ENCODE measurements at regions of chr5 and their contacts with region 1.

Region 1: DNA sequence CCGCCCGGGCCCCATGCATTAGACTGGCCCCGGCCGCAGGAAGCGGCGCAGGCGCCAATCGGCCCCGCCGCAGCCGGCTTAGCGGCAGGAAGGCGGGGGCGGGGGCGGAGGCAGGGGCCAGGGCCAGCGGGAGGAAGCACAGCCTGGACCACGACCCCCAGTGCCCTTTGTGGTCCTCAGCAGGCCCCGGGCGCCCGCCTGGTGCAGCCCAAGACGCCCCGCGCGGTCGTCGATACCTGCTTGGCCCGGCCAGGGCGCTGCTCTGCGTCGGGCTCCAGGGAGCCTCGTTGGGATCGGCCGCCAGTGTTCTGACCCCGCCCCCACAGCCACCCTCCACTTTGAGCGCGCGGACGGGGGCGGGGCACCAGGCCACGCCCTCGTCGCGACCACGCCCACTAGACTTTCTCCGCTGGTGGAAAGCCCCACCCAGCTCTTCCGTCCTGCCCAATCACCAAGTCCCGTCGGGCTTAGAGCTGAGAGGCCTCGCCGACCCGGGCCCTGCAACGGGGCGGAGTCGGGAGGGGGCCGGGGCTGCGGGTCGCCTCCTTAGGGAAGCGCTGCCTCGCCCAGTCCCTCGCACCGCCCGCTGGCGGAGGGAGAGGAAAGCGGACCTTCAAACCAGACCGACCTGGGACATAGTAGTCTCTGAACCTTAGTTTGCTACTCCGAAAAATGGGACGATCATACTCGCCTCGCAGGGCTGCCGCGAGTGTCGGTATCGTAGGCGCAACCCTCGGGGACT is at the start of gene PDLIM7:
- DNase-seq: peak; percentile 88 to 97 (median 93)
- ATAC-seq: peak; percentile 88
- H3K4me3 ChIP-seq: peak within 1 kb of the TSS; percentile 64 to 80
- H3K4me3 Mint-ChIP-seq: peak within 1 kb of the TSS; percentile 82
- H3K27ac ChIP-seq: peak within 1 kb of the TSS; percentile 18 to 20
- H3K27ac Mint-ChIP-seq: no peak within 1 kb of the TSS
- H3K4me1 ChIP-seq: peaks cover 27% of the 10 kb centered on the region
- H3K4me1 Mint-ChIP-seq: peaks cover 30% of the 10 kb centered on the region
- H3K27me3 ChIP-seq: no peaks in the 10 kb centered on the region
- H3K27me3 Mint-ChIP-seq: no peaks in the 10 kb centered on the region
- CTCF ChIP-seq: no peak
- total RNA-seq, gene PDLIM7: 6.6 to 7.1 TPM

Region 2: DNA sequence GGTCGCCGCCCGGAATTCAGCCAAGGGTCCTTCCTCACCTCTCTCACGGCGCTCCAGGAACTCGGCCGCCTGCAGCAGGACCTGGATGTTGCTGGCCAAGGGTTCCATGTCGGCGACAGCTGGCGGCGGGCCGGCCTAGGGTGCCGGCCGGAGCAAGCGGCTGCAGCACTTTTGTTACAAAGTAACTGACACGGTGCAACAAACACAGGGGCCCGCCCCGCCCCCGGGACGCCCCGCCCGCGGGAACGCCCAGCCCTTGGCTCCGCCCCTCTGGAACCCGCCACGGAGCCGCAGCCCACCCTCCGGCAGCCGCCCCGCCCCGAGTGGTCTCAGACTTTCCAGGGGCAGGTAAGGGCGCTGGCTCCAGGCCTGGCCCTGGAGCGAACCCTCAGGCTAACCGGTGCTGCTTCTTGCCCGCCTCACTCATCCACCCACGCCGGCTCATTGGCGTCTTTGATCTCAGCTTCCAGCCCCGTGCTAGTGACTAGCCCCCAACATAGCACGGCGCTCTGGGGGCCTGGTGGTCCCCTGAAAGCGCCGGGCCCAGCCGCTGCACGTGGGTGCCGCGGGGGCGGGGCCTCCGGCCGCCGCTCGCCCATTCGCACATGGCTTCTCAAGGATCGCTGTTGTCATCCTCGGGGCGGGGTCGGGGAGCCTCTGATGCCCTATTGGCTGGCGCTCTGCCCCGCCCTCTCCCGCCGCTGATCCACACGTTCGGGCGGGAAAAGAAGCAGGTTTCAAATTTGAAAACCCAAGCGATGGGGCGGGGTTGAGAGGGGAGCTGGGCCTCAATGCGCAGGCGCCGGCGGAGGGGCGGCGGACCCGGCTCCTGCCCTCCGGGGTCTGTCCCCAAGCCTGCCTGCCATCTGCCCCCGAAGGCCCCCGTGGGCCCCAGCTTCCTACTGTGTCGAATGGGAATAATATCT is 185.5 kb before region 1 on chr5 and contains the start of gene MXD3:
- CTCF ChIA-PET with region 1: interaction called, 40 read pairs
- POLR2A ChIA-PET with region 1: no interaction called
- intact Hi-C with region 1: loop called (anchors 1 kb)
- DNase-seq: peak; percentile 88 to 96 (median 94)
- ATAC-seq: peak; percentile 91
- H3K4me3 ChIP-seq: peak within 1 kb of the TSS; percentile 63 to 79
- H3K4me3 Mint-ChIP-seq: peak within 1 kb of the TSS; percentile 80
- H3K27ac ChIP-seq: peak within 1 kb of the TSS in 1 of 2 experiments; percentile 58
- H3K27ac Mint-ChIP-seq: peak within 1 kb of the TSS; percentile 49
- H3K4me1 ChIP-seq: peaks cover 36% of the 10 kb centered on the region
- H3K4me1 Mint-ChIP-seq: peaks cover 25% of the 10 kb centered on the region
- H3K27me3 ChIP-seq: no peaks in the 10 kb centered on the region
- H3K27me3 Mint-ChIP-seq: peaks cover 2% of the 10 kb centered on the region
- CTCF ChIP-seq: no peak
- total RNA-seq, gene MXD3: 6.2 to 8.5 TPM

Region 3: GRCh38 chr5:177370488-177371119 is 126.9 kb before region 1 on chr5:
- CTCF ChIA-PET with region 1: interaction called, 11 read pairs
- POLR2A ChIA-PET with region 1: no interaction called
- intact Hi-C with region 1: no loop called
- DNase-seq: peak in 8 of 9 experiments; percentile 18 to 81 (median 58)
- ATAC-seq: peak; percentile 63
- H3K4me3 ChIP-seq: no peak overlapping the region
- H3K4me3 Mint-ChIP-seq: no peak overlapping the region
- H3K27ac ChIP-seq: peak overlapping the region in 1 of 2 experiments; percentile 48
- H3K27ac Mint-ChIP-seq: peak overlapping the region; percentile 32
- H3K4me1 ChIP-seq: peaks cover 73% of the 10 kb centered on the region
- H3K4me1 Mint-ChIP-seq: peaks cover 69% of the 10 kb centered on the region
- H3K27me3 ChIP-seq: no peaks in the 10 kb centered on the region
- H3K27me3 Mint-ChIP-seq: no peaks in the 10 kb centered on the region
- CTCF ChIP-seq: no peak

Region 4: DNA sequence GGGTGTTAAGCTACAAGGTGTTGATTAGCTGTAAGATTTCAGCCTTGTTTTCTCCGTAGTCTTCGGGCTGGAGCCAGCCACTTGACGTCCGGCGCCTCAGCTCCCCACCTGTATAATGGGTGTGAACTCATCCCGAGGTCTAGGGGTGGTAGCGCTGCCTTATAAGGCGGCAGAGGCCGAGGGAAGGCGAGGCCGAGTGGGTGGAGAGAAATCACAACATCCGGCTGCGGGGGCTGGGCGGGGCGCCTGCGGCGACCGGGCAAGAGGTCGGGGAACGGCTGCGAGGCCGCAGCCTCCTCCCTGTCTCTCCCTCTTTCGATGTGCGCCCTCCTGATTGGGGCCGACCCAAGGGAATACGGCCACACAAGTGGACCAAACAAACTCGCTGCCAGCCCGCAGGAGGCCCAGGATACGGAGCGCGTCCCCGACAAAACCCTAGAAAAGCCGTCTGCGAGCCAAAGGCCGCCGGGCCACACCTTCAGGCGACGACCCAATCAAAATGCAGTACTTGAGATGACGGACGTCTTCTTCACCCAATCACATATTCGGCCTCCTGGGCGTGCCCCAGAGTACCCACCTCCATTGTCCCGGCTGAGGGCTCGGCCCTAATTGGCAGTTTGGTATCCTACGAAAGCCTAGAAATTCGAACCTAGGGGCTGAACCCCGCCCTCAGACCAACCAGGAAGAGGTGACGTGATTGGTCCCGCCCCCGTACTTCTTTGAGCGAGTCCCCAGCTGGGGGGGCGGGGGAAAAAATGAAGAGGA is 71.5 kb before region 1 on chr5:
- CTCF ChIA-PET with region 1: interaction called, 6 read pairs
- POLR2A ChIA-PET with region 1: no interaction called
- intact Hi-C with region 1: loop called in 1 of 2 experiments (anchors 1 kb)
- DNase-seq: peak; percentile 99 to 100 (median 99)
- ATAC-seq: peak; percentile 80
- H3K4me3 ChIP-seq: peak overlapping the region; percentile 63 to 65
- H3K4me3 Mint-ChIP-seq: peak overlapping the region; percentile 91
- H3K27ac ChIP-seq: peak overlapping the region; percentile 86 to 92
- H3K27ac Mint-ChIP-seq: peak overlapping the region; percentile 98
- H3K4me1 ChIP-seq: peaks cover 46% of the 10 kb centered on the region
- H3K4me1 Mint-ChIP-seq: peaks cover 53% of the 10 kb centered on the region
- H3K27me3 ChIP-seq: no peaks in the 10 kb centered on the region
- H3K27me3 Mint-ChIP-seq: no peaks in the 10 kb centered on the region
- CTCF ChIP-seq: no peak

Region 5: DNA sequence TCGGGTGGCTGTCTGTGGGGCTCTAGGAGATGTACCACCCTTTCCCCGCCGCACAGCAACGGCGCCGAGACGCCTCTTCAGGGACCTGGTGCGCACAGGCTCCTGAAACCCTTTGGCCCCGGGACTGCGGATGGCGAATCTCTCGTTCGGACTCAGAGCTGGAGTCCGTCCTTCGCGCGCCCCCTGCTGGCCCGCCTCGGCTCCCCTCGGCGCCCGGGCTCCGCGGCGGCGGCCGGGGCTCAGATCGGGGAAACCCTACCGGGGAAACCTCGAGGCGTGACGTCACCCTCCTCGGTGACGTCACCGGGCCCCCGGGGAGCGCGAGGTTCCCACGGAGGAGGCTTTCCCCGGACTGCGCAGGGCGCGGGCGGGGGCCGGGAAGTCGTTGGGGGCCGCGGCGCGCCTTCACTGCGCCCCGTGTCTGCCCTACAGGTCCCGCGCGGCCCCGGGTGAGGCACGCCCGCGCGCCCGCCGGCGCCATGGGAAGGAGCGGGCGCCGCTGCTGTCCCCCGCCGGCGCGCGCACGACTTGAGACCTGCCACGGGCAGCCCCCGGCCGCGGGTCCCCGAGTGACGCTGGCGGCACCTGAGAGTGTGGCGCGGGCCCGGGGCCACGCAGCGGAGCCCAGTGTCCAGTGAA is 42.9 kb before region 1 on chr5:
- CTCF ChIA-PET with region 1: interaction called, 79 read pairs
- POLR2A ChIA-PET with region 1: interaction called, 13 read pairs
- intact Hi-C with region 1: loop called (anchors 1 kb)
- DNase-seq: peak; percentile 90 to 98 (median 94)
- ATAC-seq: peak; percentile 55
- H3K4me3 ChIP-seq: peak overlapping the region; percentile 64 to 93
- H3K4me3 Mint-ChIP-seq: peak overlapping the region; percentile 86
- H3K27ac ChIP-seq: peak overlapping the region; percentile 88 to 96
- H3K27ac Mint-ChIP-seq: peak overlapping the region; percentile 85
- H3K4me1 ChIP-seq: peaks cover 16% of the 10 kb centered on the region
- H3K4me1 Mint-ChIP-seq: peaks cover 18% of the 10 kb centered on the region
- H3K27me3 ChIP-seq: no peaks in the 10 kb centered on the region
- H3K27me3 Mint-ChIP-seq: no peaks in the 10 kb centered on the region
- CTCF ChIP-seq: peak; percentile 84

Region 6: DNA sequence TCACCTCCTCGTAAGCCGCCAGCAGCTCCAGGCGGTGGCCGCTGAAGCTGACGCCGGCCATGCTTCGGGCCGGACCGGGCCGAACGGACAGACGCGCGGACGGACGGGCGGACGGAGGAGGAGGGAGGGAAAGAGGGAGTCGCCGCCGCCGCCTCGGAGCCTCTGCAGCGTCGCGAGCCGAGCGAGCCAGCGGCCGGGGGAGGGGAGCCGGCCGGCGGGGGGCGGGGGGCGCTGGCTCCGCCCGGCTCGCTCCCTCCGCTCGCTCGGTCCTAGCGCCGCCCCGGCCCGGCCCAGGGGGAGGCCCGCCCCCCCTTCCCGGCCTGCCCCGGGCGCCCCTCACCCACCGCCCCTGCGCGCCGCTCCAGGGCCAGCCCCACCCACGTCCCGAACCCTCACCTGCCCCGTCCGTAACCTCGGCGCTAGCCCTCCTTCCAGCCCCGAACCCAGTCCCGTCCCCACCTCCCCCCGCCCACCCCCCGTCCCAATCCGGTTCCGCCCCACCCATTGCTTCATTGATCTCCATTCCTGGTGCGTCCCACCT is 23.9 kb before region 1 on chr5 and contains the start of gene DBN1:
- CTCF ChIA-PET with region 1: interaction called, 33 read pairs
- POLR2A ChIA-PET with region 1: interaction called, 12 read pairs
- intact Hi-C with region 1: loop called (anchors 1 to 2 kb)
- DNase-seq: peak in 2 of 9 experiments; percentile 53
- ATAC-seq: peak; percentile 27
- H3K4me3 ChIP-seq: peak within 1 kb of the TSS; percentile 50 to 67
- H3K4me3 Mint-ChIP-seq: peak within 1 kb of the TSS; percentile 80
- H3K27ac ChIP-seq: peak within 1 kb of the TSS; percentile 30 to 53
- H3K27ac Mint-ChIP-seq: peak within 1 kb of the TSS; percentile 82
- H3K4me1 ChIP-seq: peaks cover 43% of the 10 kb centered on the region
- H3K4me1 Mint-ChIP-seq: peaks cover 52% of the 10 kb centered on the region
- H3K27me3 ChIP-seq: no peaks in the 10 kb centered on the region
- H3K27me3 Mint-ChIP-seq: no peaks in the 10 kb centered on the region
- CTCF ChIP-seq: no peak
- total RNA-seq, gene DBN1: 16.2 to 19.9 TPM

Region 7: GRCh38 chr5:177509381-177509951 is 12.0 kb after region 1 on chr5 and contains the start of gene DOK3:
- CTCF ChIA-PET with region 1: interaction called, 29 read pairs
- POLR2A ChIA-PET with region 1: no interaction called
- intact Hi-C with region 1: no loop called
- DNase-seq: no peak
- ATAC-seq: no peak
- H3K4me3 ChIP-seq: no peak within 1 kb of the TSS
- H3K4me3 Mint-ChIP-seq: peak within 1 kb of the TSS; percentile 32
- H3K27ac ChIP-seq: no peak within 1 kb of the TSS
- H3K27ac Mint-ChIP-seq: no peak within 1 kb of the TSS
- H3K4me1 ChIP-seq: no peaks in the 10 kb centered on the region
- H3K4me1 Mint-ChIP-seq: peaks cover 5% of the 10 kb centered on the region
- H3K27me3 ChIP-seq: no peaks in the 10 kb centered on the region
- H3K27me3 Mint-ChIP-seq: no peaks in the 10 kb centered on the region
- CTCF ChIP-seq: no peak
- total RNA-seq, gene DOK3: 1.1 to 1.2 TPM

Measured in CD8-positive, alpha-beta T cell (primary cell).